Right ventricle myocardium inferior (tissue), 1 donor: ENCODE measurements at regions of chr4 and their contacts with region 1.

Region 1: GRCh38 chr4:100742045-100742444 is 224.2 kb upstream of the EMCN start:
- DNase-seq: no peak
- ATAC-seq: no peak

Region 2: GRCh38 chr4:100093091-100093866 is 648.8 kb before region 1 on chr4:
- intact Hi-C with region 1: loop called (anchors 5 kb)
- DNase-seq: peak; percentile 71
- ATAC-seq: peak; percentile 79

Region 3: GRCh38 chr4:100268789-100269188 is 473.3 kb before region 1 on chr4:
- intact Hi-C with region 1: no loop called
- DNase-seq: no peak
- ATAC-seq: no peak

Region 4: GRCh38 chr4:100421361-100421978 is 320.6 kb before region 1 on chr4:
- intact Hi-C with region 1: loop called (anchors 5 kb)
- DNase-seq: no peak
- ATAC-seq: no peak

Region 5: GRCh38 chr4:100517864-100518341 is 224.1 kb before region 1 on chr4 and contains the start of gene EMCN:
- intact Hi-C with region 1: loop called (anchors 5 kb)
- DNase-seq: peak; percentile 11
- ATAC-seq: no peak
- total RNA-seq, gene EMCN: 46.4 TPM

Region 6: DNA sequence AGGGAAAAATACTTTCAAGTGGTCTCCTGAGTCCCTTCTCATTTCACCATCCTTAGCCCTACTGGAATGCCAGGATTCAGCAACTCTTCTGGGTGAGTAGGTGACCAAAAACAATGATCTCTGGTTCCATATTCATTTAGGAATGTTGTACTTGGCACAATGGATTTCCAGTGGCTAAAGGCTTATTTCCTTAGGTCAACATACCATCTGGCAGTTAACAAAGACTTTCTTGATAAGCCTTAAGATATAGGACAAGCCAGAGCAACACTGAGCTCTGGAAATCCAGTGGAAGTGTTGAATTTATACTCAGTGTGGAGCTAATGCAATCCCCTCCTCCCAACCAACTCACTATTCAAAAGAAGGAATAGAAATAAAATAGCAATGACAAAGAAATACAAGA is 84.9 kb before region 1 on chr4:
- intact Hi-C with region 1: loop called (anchors 10 kb)
- DNase-seq: no peak
- ATAC-seq: no peak